ENCODE measurements at regions of chr16 and their contacts with region 1.

Region 1: DNA sequence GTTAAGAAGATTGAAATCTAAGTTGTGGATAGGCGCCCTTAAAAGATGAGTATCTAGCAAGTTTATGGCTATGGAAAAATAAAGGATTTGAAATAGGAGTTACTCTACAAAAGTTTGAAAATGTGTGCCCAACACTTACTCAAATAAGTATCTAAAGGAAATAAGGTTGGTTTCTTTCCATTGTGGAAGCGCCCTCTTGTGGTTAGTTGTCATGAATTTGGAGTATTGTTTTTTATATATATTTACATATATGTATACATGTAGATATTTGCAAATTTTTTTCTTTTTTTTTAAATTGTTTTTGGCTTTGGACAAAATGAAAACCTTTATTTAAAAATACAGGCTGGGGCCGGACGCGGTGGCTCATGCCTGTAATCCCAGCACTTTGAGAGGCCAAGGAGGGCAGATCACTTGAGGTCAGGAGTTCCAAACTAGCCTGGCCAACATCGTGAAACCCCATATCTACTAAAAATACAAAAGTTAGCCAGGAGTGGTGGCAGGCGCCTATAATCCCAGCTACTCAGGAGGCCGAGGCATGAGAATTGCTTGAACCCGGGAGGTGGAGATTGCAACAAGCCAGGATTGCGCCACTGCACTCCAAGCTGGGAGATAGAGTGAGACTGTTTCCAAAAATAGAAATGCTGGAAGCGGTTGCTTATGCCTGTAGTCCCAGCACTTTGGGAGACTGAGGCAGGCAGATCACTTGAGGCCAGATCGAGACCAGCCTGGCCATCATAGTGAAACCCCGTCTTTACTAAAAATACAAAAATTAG is 24.0 kb upstream of the VPS4A start:
- DNase-seq: peak in 3 of 4 donors; percentile 64 to 81 (median 67)
- ATAC-seq: peak; percentile 73
- H3K4me3 ChIP-seq: no peak overlapping the region
- H3K27ac ChIP-seq: peak overlapping the region in 1 of 2 donors; percentile 10
- H3K4me1 ChIP-seq: peaks cover 0 to 18% of the 10 kb centered on the region in 2 donors
- H3K27me3 ChIP-seq: no peaks in the 10 kb centered on the region
- CTCF ChIP-seq: peak; percentile 40 to 59

Region 2: GRCh38 chr16:69150146-69150865 is 136.8 kb before region 1 on chr16:
- intact Hi-C with region 1: loop called in 1 of 2 experiments (anchors 5 kb)
- DNase-seq: peak in 2 of 4 donors; percentile 74 to 87
- ATAC-seq: peak; percentile 97
- H3K4me3 ChIP-seq: no peak overlapping the region
- H3K27ac ChIP-seq: no peak overlapping the region
- H3K4me1 ChIP-seq: no peaks in the 10 kb centered on the region
- H3K27me3 ChIP-seq: no peaks in the 10 kb centered on the region
- CTCF ChIP-seq: peak; percentile 78

Region 3: DNA sequence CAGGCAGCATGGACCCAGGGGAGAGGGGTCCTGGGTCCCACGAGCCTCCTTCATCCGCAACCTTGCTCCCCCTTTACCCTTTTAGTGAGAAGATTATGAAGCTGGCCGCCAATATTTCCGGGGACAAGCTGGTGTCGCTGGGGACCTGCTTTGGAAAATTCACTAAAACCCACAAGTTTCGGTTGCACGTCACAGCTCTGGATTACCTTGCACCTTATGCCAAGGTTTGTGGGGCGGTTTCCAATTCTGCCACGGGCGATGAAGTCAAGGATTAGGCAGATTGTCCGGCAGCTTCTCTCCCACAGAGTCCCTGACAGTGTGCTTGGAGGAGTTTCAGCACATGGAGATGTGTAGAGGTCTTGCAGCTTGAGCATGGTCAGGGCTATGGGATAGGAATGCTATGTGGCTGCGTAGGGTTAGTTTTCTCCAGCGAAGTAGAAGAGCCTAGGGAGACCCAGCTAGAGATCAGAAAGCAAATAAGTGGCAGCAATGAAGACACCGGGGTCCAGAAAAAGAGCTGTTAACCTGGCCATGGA is 53.0 kb after region 1 on chr16:
- intact Hi-C with region 1: no loop called
- DNase-seq: no peak
- ATAC-seq: no peak
- H3K4me3 ChIP-seq: peak overlapping the region; percentile 80 to 95
- H3K27ac ChIP-seq: peak overlapping the region; percentile 83 to 97
- H3K4me1 ChIP-seq: peaks cover 23 to 39% of the 10 kb centered on the region in 2 donors
- H3K27me3 ChIP-seq: no peaks in the 10 kb centered on the region
- CTCF ChIP-seq: no peak